Heart right ventricle (tissue), 16 donors: ENCODE measurements at regions of chr15 and their contacts with region 1.

Region 1: GRCh38 chr15:29089731-29090616 is 179.6 kb downstream of the NSMCE3 start:
- DNase-seq: no peak
- ATAC-seq: no peak
- H3K4me3 ChIP-seq: no peak overlapping the region
- H3K27ac ChIP-seq: peak overlapping the region in 1 of 10 donors; percentile 53
- H3K4me1 ChIP-seq: no peaks in the 10 kb centered on the region
- H3K27me3 ChIP-seq: peaks cover 0 to 27% (median 17%) of the 10 kb centered on the region in 7 donors
- CTCF ChIP-seq: no peak

Region 2: DNA sequence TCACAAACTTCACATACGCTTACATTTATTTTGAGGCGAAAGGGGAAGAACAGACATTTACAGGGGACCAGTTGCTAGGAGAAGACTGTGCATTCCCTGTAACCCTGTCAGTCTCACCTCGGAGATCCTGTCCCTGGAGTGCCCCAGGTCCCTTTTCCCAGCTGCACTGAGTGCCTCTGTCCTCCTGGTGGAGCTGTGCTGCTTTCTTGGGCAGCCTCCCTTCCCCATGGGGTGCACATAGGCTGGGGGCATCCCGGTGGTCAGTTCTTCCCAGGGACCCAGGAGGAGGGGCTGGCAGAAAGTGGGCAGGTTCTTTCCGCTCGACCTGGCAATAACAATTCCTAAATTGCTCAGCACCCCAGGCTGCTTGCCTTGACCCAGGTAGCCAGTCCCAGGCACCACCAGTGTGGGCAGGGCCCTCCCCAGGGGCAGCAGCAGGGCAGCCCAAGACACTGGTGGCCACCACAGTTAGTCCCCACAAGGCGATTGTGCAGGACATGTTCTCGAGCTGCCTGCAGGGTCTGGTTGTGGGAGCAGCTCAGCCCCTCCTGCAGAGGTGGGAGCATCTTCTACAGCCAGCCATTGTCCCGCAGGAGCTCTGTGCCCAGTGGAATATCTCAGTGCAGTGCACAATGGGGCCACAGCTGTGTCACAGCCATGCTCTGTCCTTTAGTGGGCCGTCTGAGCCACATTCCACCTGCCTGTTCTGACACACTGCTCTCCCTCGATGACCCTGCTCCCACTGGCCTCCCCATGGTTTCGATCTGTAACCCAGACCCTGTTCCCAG is 167.9 kb before region 1 on chr15:
- intact Hi-C with region 1: loop called in 1 of 10 experiments (anchors 10 kb)
- DNase-seq: no peak
- ATAC-seq: peak in 1 of 8 donors; percentile 44
- H3K4me3 ChIP-seq: no peak overlapping the region
- H3K27ac ChIP-seq: no peak overlapping the region
- H3K4me1 ChIP-seq: no peaks in the 10 kb centered on the region
- H3K27me3 ChIP-seq: peaks cover 0 to 28% (median 20%) of the 10 kb centered on the region in 7 donors
- CTCF ChIP-seq: peak in 1 of 9 donors; percentile 7

Region 3: DNA sequence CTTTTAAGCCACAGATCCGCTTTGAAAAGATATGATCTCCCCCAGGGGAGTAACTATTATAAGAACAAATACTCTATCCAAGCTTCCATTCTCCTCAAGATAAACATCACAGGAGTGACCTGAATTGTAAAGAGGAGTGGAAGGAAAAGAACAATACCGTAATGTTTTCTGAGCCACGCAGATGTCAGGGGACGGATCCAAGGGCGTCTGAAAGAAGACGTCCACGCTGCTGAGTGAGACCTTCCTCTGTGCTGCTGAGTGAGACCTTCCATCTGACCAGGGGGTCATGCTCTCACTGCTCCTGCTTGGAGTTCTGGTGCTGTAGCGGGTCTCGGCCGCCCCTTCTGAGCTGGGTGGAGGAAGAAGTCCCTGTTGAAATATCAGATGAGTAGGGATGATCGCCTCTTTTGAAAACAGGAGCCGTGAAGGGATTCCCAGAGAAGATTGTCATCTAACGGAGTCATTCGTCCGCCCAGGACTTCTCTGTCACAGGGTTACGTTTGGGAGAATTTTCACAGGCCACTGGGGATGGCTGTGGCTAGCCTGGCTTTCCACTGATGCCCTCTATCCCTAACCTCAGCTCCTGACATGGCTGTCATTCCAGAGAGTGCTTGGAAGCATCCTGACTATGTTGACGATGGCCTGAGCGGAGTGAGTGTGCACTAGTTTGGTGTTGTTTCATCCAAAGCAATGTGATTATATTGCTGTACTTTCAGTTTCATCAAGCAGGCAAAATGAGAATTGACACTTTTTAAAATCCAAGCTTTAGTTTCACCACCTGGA is 19.3 kb before region 1 on chr15:
- intact Hi-C with region 1: no loop called
- DNase-seq: no peak
- ATAC-seq: no peak
- H3K4me3 ChIP-seq: no peak overlapping the region
- H3K27ac ChIP-seq: no peak overlapping the region
- H3K4me1 ChIP-seq: no peaks in the 10 kb centered on the region
- H3K27me3 ChIP-seq: peaks cover 0 to 7% (median 0%) of the 10 kb centered on the region in 7 donors
- CTCF ChIP-seq: no peak

Region 4: DNA sequence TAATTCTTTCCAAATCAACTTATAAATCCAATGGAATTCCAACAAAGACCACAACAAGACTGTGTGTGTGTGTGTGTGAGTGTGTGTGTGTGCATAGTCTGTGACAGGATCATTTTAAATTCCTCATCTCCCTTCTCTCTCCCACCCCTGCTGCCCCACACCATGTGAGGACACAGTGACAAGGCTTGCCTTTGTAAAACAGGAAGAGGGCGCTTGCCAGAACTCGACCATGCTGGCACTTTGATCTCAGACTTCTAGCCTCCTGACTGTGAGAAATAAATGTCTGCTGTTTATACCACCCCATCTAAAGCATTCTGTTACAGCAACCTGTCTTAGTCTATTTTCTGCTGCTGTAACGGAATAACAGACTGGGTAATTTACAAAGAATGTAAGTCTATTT is 80.5 kb after region 1 on chr15:
- intact Hi-C with region 1: no loop called
- DNase-seq: no peak
- ATAC-seq: no peak
- H3K4me3 ChIP-seq: no peak overlapping the region
- H3K27ac ChIP-seq: no peak overlapping the region
- H3K4me1 ChIP-seq: no peaks in the 10 kb centered on the region
- H3K27me3 ChIP-seq: peaks cover 0 to 7% (median 0%) of the 10 kb centered on the region in 7 donors
- CTCF ChIP-seq: no peak